ENCODE measurements at regions of chr10 and their contacts with region 1.

Region 1: DNA sequence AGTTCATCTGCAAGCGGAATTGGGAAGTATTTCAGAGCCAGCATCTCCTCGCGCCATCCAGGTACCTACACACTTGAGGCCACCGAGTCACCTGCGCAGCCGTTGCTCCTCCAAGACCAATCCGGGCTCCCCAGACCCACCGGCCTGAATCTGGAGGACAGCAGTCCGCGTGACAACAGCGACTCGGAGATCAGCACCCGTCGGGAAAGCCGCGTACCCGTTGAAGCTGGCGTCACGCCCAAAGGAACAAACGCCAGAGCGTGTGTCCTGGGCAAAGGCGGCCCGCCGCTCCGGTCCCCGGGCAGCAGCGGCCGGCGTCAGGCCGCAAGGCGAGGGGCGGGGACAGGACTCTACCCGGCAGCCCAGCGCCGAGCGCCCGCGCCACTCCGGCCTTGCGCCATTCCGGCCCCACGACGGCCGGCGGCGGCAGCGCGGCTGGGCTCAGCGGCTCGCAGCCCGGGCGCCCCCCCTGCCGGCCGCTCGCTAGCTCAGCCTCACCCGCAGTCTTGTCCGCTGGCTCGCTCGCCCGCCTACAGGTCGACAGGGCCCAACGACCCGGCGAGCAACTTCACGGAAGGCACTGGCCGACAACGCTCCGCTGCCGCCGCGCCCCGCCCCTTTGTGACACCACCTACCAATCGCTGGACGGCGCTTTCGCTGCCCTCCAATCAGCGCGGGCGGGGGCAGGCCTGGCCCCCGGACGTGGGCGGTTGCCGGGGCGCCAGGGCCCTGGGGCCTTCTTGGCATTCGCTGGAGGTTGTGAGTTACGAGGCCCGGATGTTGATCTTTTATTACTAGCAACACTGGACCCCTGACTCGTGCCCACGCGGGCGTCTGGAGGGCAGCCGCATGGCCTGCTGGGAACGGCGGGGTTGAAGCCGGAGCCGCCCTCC is at the start of gene ZFAND4:
- DNase-seq: peak; percentile 94
- H3K27ac ChIP-seq: peak within 1 kb of the TSS; percentile 84
- CTCF ChIP-seq: peak; percentile 79

Region 2: DNA sequence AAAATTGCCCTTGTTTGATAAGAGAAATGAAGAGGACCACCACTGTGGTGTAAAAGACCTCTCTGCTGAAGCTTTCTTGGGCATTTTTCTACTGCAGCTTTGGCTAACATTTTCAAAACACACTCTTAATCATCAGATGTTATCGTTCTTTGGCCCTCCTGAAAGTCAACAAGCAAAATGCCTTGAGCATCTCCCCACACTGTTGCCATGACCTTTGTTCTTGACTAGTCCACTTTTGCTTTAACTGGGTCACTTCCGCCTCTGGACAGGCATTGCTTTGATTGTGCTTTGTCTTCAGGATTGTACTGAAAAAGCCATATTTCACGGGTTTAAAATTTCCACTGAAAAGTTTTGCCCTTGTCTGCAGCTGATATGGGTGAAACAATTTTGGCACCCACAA is 1179.8 kb before region 1 on chr10:
- CTCF ChIA-PET with region 1: no interaction called
- POLR2A ChIA-PET with region 1: no interaction called
- DNase-seq: no peak
- H3K27ac ChIP-seq: no peak overlapping the region
- CTCF ChIP-seq: no peak

Region 3: GRCh38 chr10:45464958-45465567 is 207.4 kb before region 1 on chr10:
- CTCF ChIA-PET with region 1: interaction called, 11 read pairs
- POLR2A ChIA-PET with region 1: no interaction called
- DNase-seq: peak; percentile 73
- H3K27ac ChIP-seq: no peak overlapping the region
- CTCF ChIP-seq: peak; percentile 90

Region 4: GRCh38 chr10:45646384-45647050 is 25.9 kb before region 1 on chr10:
- CTCF ChIA-PET with region 1: no interaction called
- POLR2A ChIA-PET with region 1: no interaction called
- DNase-seq: no peak
- H3K27ac ChIP-seq: no peak overlapping the region
- CTCF ChIP-seq: no peak

Measured in RWPE1 (cell line).